IMR-90 (cell line): ENCODE measurements at regions of chr14 and their contacts with region 1.

Region 1: GRCh38 chr14:96501742-96502617 is at the start of gene PAPOLA:
- DNase-seq: peak; percentile 95
- ATAC-seq: peak; percentile 94
- H3K4me3 ChIP-seq: peak within 1 kb of the TSS; percentile 76
- H3K27ac ChIP-seq: peak within 1 kb of the TSS; percentile 86
- H3K4me1 ChIP-seq: peaks cover 3% of the 10 kb centered on the region; the same call in 1 of the 2 replicates
- H3K27me3 ChIP-seq: no peaks in the 10 kb centered on the region
- CTCF ChIP-seq: peak; percentile 14; the same call in 1 of the 2 replicates
- POLR2A ChIP-seq: peak; percentile 93
- RAD21 ChIP-seq: no peak
- total RNA-seq, gene PAPOLA: 128 and 137 TPM in 2 replicates

Region 2: DNA sequence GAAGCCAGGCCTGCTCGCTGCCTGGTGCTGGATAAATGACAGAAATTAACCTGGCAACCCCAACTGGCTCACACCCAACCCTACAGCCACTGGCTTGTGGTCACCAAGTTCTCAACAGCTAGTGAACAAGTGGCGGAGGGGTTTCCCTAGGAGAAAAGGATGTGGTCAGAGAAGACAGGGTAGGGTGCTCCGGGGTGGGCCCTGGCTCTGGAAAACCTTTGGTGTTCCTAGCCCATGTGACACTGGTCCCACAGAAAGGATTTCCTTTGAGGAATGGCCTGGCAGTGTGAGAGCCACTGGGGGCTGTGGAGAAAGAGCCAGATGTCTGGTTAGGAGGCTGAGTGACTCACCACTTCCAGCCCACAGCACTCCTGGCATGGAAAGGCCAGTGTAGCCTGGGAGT is 994.3 kb before region 1 on chr14:
- CTCF ChIA-PET with region 1: no interaction called
- POLR2A ChIA-PET with region 1: interaction called, 11 read pairs
- dilution Hi-C with region 1: no loop called
- in situ Hi-C with region 1: no loop called
- intact Hi-C with region 1: no loop called
- DNase-seq: peak; percentile 75
- ATAC-seq: peak; percentile 53
- H3K4me3 ChIP-seq: no peak overlapping the region
- H3K27ac ChIP-seq: peak overlapping the region; percentile 36; the same call in 1 of the 2 replicates
- H3K4me1 ChIP-seq: peaks cover 24% of the 10 kb centered on the region
- H3K27me3 ChIP-seq: no peaks in the 10 kb centered on the region
- CTCF ChIP-seq: no peak
- POLR2A ChIP-seq: no peak
- RAD21 ChIP-seq: no peak

Region 3: DNA sequence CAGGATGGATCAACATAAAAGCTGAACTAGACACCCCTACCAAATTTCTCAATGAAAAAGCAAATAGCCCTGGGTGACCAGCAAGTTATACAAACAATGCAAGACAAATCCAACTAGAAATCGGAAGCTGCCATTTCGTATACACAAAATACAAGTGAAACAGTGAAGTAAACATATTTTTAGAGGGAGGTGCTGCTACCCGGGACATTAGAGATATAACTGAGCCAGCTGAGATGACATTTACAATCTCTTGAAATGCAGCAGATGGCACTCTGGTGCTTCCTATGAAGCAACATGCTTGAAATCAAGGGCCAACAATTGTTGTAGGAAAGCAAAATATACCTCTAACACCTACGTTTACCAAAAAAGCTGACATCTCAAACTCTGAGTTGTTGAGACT is 220.5 kb before region 1 on chr14:
- CTCF ChIA-PET with region 1: no interaction called
- POLR2A ChIA-PET with region 1: no interaction called
- dilution Hi-C with region 1: no loop called
- in situ Hi-C with region 1: no loop called
- intact Hi-C with region 1: loop called (anchors 10 kb)
- DNase-seq: peak; percentile 17
- ATAC-seq: no peak
- H3K4me3 ChIP-seq: no peak overlapping the region
- H3K27ac ChIP-seq: no peak overlapping the region
- H3K4me1 ChIP-seq: peaks cover 13% of the 10 kb centered on the region
- H3K27me3 ChIP-seq: no peaks in the 10 kb centered on the region
- CTCF ChIP-seq: 0 out of 2 replicates have a peak, but pooled peaks have one; percentile 24
- POLR2A ChIP-seq: no peak
- RAD21 ChIP-seq: no peak